ENCODE measurements at regions of chr18 and their contacts with region 1.

Region 1: DNA sequence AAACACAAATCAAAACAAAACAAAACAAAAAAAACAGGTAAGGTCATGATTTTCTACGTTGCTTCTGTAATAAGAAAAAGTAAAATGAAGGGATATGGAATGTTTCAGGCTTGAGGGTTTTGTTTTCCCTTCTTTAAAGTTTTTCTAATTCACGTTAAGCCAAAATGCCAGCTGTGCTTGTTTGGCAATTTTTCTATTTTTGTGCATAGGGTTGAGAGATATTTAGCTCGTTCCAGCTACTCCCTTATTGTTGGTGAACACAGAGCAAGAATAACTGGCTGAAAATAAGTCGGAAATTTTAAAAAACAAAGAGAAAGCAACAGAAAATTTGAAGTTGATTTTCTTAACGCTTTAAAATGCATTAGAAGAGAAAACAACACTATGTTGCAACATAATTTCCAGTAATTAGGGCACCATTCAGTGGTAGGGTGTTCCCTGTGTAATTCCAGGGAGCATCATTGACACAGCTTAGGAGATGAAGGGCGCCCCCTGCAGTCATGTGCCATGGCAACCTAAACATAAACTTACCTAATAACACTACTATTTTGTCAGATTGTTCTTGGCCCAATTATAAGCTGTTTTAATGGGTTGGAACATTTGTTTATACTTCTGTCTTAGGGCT is 99.5 kb downstream of the DTNA start:
- DNase-seq: peak; percentile 79
- H3K4me3 ChIP-seq: no peak overlapping the region
- H3K27ac ChIP-seq: no peak overlapping the region
- H3K4me1 ChIP-seq: no peaks in the 10 kb centered on the region
- H3K27me3 ChIP-seq: no peaks in the 10 kb centered on the region
- CTCF ChIP-seq: peak; percentile 85

Region 2: DNA sequence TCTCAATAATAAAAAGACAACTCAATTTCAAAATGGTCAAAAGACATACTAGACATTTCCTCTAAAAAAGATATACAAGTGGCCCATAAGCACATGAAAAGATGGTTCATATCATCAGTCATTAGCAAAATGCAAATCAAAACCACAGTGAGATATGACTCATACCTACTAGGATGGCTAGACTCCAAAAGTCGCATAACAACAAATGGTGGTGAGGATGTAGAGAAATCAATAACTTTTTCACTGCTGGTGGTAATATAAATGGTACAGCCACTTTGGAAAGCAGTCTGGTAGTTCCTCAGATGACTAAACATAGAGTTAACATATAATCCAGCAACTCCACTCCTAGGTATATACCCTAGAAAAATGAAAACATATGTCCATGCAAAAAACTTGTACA is 342.5 kb before region 1 on chr18:
- CTCF ChIA-PET with region 1: no interaction called
- POLR2A ChIA-PET with region 1: no interaction called
- intact Hi-C with region 1: no loop called
- DNase-seq: peak; percentile 15
- H3K4me3 ChIP-seq: no peak overlapping the region
- H3K27ac ChIP-seq: no peak overlapping the region
- H3K4me1 ChIP-seq: no peaks in the 10 kb centered on the region
- H3K27me3 ChIP-seq: no peaks in the 10 kb centered on the region
- CTCF ChIP-seq: no peak

Region 3: GRCh38 chr18:34595673-34596303 is 213.8 kb before region 1 on chr18:
- CTCF ChIA-PET with region 1: no interaction called
- POLR2A ChIA-PET with region 1: no interaction called
- intact Hi-C with region 1: loop called (anchors 5 kb)
- DNase-seq: peak; percentile 52
- H3K4me3 ChIP-seq: no peak overlapping the region
- H3K27ac ChIP-seq: no peak overlapping the region
- H3K4me1 ChIP-seq: no peaks in the 10 kb centered on the region
- H3K27me3 ChIP-seq: no peaks in the 10 kb centered on the region
- CTCF ChIP-seq: peak; percentile 62

Region 4: DNA sequence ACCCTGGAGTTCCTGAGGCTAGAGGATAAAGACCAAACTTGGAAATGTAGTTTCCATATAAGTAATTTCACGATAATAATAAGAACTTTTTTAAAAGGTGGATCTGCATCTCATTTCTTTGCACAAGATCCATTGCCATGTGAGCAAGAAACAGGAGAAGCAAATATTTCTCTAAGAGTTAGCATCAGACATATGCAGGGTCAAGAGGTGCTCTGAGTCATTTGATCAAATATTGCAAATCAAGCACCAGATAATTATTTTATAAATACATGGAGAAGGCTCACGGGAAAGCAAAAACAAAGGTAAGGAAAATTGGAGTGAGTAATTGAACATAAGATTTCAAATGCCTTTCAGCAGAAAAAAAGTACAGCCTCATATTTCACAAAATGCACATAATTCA is 18.5 kb after region 1 on chr18:
- CTCF ChIA-PET with region 1: no interaction called
- POLR2A ChIA-PET with region 1: no interaction called
- intact Hi-C with region 1: loop called (anchors 2 kb)
- DNase-seq: no peak
- H3K4me3 ChIP-seq: no peak overlapping the region
- H3K27ac ChIP-seq: no peak overlapping the region
- H3K4me1 ChIP-seq: no peaks in the 10 kb centered on the region
- H3K27me3 ChIP-seq: no peaks in the 10 kb centered on the region
- CTCF ChIP-seq: no peak

Measured in A673 (cell line).